GM12878 (cell line): ENCODE measurements at regions of chr14 and their contacts with region 1.

Region 1: GRCh38 chr14:71430321-71431208 is 501.7 kb upstream of the RGS6 start:
- DNase-seq: peak; percentile 73
- ATAC-seq: peak; percentile 82
- H3K4me3 ChIP-seq: peak overlapping the region; percentile 58; the same call in 1 of the 2 replicates
- H3K27ac ChIP-seq: peak overlapping the region; percentile 84
- H3K4me1 ChIP-seq: peaks cover 33% of the 10 kb centered on the region
- H3K27me3 ChIP-seq: no peaks in the 10 kb centered on the region
- CTCF ChIP-seq: no peak
- EP300 ChIP-seq: peak; percentile 47 to 60; a peak in 3 of 4 replicates
- POLR2A ChIP-seq: no peak
- RAD21 ChIP-seq: 0 out of 2 replicates have a peak, but pooled peaks have one; percentile 6

Region 2: DNA sequence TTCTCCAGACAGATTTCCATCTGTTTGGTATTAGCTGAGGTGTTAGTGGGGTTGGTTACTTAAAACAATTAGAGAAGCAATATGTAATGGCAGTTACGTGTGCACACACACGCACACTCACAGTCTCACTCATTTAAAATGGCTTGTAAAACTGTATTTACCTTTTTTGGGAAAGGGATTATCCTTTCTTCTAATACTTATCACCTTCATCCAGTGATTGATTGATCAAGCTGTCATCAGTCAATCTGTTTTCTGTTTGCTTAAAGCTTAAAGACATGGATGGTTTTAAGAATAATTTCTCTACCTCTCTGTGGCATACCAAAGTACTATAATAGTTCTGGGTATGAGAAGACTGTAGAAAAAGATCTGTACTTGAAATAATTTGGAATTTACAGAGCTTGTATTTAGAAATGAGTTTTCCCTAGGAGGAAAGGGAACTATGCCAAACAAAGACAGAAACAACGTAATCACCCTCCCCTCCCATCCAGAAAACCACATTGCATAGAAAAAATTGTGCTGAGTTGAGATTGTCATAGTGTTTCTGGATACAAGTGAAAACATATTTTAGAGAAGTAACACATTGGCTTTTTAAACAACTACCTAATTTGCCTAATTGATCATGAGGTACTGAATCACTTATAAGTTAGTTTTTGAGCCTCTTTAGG is 67.5 kb before region 1 on chr14:
- CTCF ChIA-PET with region 1: interaction called, 4 read pairs
- POLR2A ChIA-PET with region 1: interaction called, 3 read pairs
- RAD21 ChIA-PET with region 1: interaction called, 13 read pairs
- SMC1A ChIA-PET with region 1: interaction called, 15 read pairs
- in situ Hi-C with region 1: no loop called
- intact Hi-C with region 1: no loop called
- DNase-seq: peak; percentile 53
- ATAC-seq: peak; percentile 73
- H3K4me3 ChIP-seq: no peak overlapping the region
- H3K27ac ChIP-seq: peak overlapping the region; percentile 47; the same call in 1 of the 2 replicates
- H3K4me1 ChIP-seq: peaks cover 49% of the 10 kb centered on the region
- H3K27me3 ChIP-seq: no peaks in the 10 kb centered on the region
- CTCF ChIP-seq: no peak
- EP300 ChIP-seq: peak; percentile 33 to 51; a peak in 1 of 4 replicates
- POLR2A ChIP-seq: no peak
- RAD21 ChIP-seq: no peak

Region 3: GRCh38 chr14:71452987-71453386 is 22.4 kb after region 1 on chr14:
- CTCF ChIA-PET with region 1: interaction called, 4 read pairs
- POLR2A ChIA-PET with region 1: interaction called, 5 read pairs
- RAD21 ChIA-PET with region 1: interaction called, 17 read pairs
- SMC1A ChIA-PET with region 1: interaction called, 63 read pairs
- in situ Hi-C with region 1: no loop called
- intact Hi-C with region 1: no loop called
- DNase-seq: no peak
- ATAC-seq: peak; percentile 36
- H3K4me3 ChIP-seq: no peak overlapping the region
- H3K27ac ChIP-seq: no peak overlapping the region
- H3K4me1 ChIP-seq: no peaks in the 10 kb centered on the region
- H3K27me3 ChIP-seq: no peaks in the 10 kb centered on the region
- CTCF ChIP-seq: no peak
- EP300 ChIP-seq: no peak
- POLR2A ChIP-seq: no peak
- RAD21 ChIP-seq: no peak

Region 4: DNA sequence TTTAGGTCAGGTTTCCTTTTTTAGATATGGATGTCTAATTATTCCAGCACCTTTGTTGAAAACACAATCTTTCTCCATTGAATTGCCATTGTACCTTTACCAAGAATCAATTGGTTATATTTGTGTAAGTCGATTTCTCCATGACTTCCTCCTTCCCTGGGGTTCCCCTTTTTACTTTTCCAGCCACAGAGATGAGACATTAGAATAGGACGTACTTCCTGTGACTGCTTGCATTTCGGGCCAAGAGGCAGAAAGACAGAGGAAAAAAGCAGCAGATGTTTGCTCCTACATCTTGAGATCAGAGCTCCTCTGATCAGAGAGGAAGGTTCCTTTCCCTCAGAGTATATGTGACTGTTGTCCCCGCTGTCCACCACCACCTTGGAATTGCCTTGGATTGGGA is 48.0 kb after region 1 on chr14:
- CTCF ChIA-PET with region 1: interaction called, 3 read pairs
- POLR2A ChIA-PET with region 1: interaction called, 3 read pairs
- RAD21 ChIA-PET with region 1: interaction called, 26 read pairs
- SMC1A ChIA-PET with region 1: interaction called, 36 read pairs
- in situ Hi-C with region 1: no loop called
- intact Hi-C with region 1: no loop called
- DNase-seq: no peak
- ATAC-seq: peak; percentile 54
- H3K4me3 ChIP-seq: 0 out of 2 replicates have a peak overlapping the region, but pooled peaks have one; percentile 10
- H3K27ac ChIP-seq: peak overlapping the region; percentile 78
- H3K4me1 ChIP-seq: peaks cover 35% of the 10 kb centered on the region
- H3K27me3 ChIP-seq: no peaks in the 10 kb centered on the region
- CTCF ChIP-seq: no peak
- EP300 ChIP-seq: no peak
- POLR2A ChIP-seq: no peak
- RAD21 ChIP-seq: no peak

Region 5: GRCh38 chr14:71497645-71498086 is 67.1 kb after region 1 on chr14:
- CTCF ChIA-PET with region 1: interaction called, 8 read pairs
- POLR2A ChIA-PET with region 1: interaction called, 10 read pairs
- RAD21 ChIA-PET with region 1: interaction called, 39 read pairs
- SMC1A ChIA-PET with region 1: interaction called, 36 read pairs
- in situ Hi-C with region 1: no loop called
- intact Hi-C with region 1: loop called (anchors 5 kb)
- DNase-seq: peak; percentile 98
- ATAC-seq: peak; percentile 91
- H3K4me3 ChIP-seq: no peak overlapping the region
- H3K27ac ChIP-seq: peak overlapping the region; percentile 94
- H3K4me1 ChIP-seq: peaks cover 43% of the 10 kb centered on the region
- H3K27me3 ChIP-seq: no peaks in the 10 kb centered on the region
- CTCF ChIP-seq: no peak
- EP300 ChIP-seq: peak; percentile 99
- POLR2A ChIP-seq: no peak
- RAD21 ChIP-seq: no peak; the same call in none of the 2 replicates

Region 6: DNA sequence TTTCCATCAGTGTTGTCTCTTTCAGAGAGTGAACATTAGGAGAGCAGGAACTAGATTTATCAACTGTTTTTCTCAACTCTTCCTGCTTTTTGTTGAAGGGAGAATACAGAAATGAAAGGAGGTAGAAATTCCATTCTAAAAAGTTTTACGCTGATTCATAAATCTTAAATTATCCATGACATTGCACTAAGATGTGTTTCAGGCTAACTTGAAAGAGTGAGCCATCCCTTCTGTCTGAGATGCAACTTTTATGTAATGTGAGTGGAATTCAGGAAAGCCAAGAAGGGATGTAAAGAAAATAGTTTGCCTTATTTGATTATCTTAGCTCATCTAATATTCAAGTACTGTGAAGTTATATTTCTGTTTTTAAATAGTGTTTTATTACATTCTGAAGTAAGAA is 152.1 kb after region 1 on chr14:
- CTCF ChIA-PET with region 1: no interaction called
- POLR2A ChIA-PET with region 1: no interaction called
- RAD21 ChIA-PET with region 1: no interaction called
- SMC1A ChIA-PET with region 1: no interaction called
- in situ Hi-C with region 1: no loop called
- intact Hi-C with region 1: no loop called
- DNase-seq: no peak
- ATAC-seq: no peak
- H3K4me3 ChIP-seq: no peak overlapping the region
- H3K27ac ChIP-seq: no peak overlapping the region
- H3K4me1 ChIP-seq: no peaks in the 10 kb centered on the region
- H3K27me3 ChIP-seq: no peaks in the 10 kb centered on the region
- CTCF ChIP-seq: no peak
- EP300 ChIP-seq: no peak
- POLR2A ChIP-seq: no peak
- RAD21 ChIP-seq: no peak